Dendritic cell treated with granulocyte-macrophage colony-stimulating factor and Interleukin-4, amounts not matched to agents 40 ng/mL and 50 ng/mL, for 4 days (primary cell): ENCODE measurements at regions of chr22 and their contacts with region 1.

Region 1: DNA sequence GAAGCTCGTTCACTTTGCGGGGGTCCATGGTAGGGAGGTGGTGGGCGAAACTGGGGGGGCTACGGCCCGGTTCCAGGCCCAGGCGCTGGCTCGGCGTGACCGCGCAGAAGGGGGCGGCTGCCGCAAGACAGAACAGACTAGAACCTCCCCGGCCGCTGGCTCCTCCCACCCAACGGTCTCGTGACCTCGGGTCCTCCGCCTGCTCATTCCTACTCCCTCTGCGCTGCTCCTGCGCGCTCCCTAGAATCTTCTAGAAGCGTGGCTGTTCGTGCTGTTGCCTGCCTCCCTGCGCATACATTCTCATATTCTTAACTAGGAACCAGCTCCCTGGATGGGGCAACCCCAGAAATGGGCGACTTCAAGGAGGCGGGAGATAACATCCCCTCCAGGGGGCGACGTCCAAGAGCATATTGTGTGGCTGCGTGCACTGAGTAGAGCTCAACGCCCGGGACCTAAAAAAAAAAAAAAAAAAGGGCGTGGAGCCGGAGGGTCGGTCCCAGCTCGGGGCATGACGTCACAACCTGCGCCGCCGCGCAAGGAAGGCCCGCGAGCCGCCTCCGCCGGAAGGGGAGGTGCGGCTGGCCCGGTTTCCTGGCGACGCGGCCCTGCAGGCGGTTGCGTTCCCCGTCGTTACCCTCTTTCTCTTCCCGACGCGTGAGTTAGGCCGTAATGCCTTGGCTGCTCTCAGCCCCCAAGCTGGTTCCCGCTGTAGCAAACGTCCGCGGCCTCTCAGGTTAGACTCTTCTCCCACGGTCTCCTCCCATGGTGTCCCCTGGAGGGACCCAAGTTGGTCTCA is at the starts of genes ST13 and XPNPEP3:
- H3K4me3 Mint-ChIP-seq: peak within 1 kb of the TSS; percentile 99
- H3K27ac Mint-ChIP-seq: peak within 1 kb of the TSS; percentile 99
- H3K4me1 Mint-ChIP-seq: peaks cover 34% of the 10 kb centered on the region
- H3K27me3 Mint-ChIP-seq: no peaks in the 10 kb centered on the region

Region 2: DNA sequence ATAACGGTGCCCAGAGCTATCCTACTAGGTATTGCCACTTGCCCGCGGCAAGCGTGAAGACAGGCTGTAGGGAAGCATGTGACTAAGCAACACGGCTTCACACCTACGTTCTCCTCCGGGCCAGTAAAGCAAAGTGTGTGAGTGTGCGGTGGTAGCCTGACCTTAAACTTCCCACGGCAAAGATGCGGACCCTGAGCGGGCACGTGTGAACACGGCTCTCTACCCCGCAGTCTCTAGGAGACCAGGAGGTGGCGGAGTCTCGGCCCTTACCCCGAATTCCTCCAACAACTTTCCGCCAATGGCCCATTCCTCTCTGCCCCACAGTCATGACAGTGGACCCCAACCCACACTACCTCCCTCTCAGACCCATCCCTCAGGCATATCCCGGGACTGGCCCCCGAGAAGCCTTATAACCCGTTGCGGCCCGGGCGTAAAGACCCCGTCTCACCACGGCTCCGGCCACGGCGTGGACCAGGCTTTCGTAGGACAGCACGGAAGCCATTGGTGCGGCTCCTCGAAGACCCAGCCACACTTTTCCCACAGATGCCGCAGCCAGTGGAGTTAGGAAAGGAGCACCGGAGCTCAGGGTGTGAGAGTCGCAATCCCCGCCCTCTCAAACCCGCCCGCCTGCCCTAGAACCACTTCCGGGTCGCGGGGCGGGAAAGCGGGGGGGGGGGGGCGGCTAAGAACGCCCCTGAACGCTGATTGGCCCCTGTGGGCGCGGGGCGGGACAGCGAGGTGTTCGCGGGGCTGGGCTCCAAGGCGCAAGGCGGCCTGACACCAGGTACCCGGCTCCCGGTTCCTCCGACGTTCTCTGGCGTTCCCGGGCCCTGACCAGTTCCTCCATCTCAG is 37.7 kb before region 1 on chr22 and contains the start of gene SLC25A17:
- intact Hi-C with region 1: loop called (anchors 5 kb)
- H3K4me3 Mint-ChIP-seq: peak within 1 kb of the TSS; percentile 95
- H3K27ac Mint-ChIP-seq: peak within 1 kb of the TSS; percentile 94
- H3K4me1 Mint-ChIP-seq: peaks cover 32% of the 10 kb centered on the region
- H3K27me3 Mint-ChIP-seq: no peaks in the 10 kb centered on the region

Region 3: DNA sequence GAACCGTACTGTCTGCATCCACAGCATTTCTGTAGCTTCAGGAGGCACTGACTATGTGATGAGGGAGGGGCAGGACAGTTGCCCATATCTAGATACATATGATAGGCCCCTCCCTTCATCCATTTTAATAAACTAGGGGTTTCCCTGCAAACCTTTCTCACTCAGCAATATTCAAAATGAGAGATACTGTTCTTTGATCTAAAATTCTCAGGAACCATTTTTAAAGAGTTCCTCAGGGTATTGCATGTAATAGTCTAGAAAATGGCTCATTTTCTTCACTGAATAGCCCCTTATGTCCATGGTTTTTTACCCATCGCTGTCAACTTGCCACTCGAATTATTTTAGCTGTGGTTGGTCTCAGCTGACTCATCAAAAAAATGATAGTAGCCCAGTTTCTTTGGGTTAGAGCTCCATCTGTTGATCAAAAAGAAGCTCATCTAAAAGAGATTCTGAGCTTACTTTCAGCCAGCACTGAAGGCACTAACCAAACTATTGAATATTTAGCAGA is 42.2 kb after region 1 on chr22:
- intact Hi-C with region 1: loop called (anchors 2 kb)
- H3K4me3 Mint-ChIP-seq: no peak overlapping the region
- H3K27ac Mint-ChIP-seq: no peak overlapping the region
- H3K4me1 Mint-ChIP-seq: no peaks in the 10 kb centered on the region
- H3K27me3 Mint-ChIP-seq: no peaks in the 10 kb centered on the region

Region 4: DNA sequence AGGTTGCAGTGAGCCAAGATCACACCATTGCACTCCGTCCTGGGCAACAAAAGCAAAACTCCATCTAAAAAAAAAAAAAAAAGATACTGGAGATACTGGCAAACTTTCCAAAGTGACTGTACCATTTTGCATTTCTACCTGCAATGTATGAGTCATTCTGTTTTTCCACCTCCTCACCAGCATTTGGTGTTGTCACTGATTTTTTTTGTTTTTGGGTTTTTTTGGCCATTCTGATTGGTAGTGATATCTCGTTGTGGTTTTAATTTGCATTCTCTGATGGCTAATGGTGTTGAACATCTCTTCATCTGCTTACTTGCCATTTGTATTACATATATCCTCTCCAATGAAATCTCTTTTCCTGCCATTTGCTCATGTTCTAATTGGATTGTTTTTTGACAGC is 82.5 kb after region 1 on chr22:
- intact Hi-C with region 1: no loop called
- H3K4me3 Mint-ChIP-seq: no peak overlapping the region
- H3K27ac Mint-ChIP-seq: no peak overlapping the region
- H3K4me1 Mint-ChIP-seq: peaks cover 26% of the 10 kb centered on the region
- H3K27me3 Mint-ChIP-seq: no peaks in the 10 kb centered on the region